ENCODE measurements at regions of chr12 and their contacts with region 1.

Region 1: GRCh38 chr12:124567661-124568373 is 405 bp upstream of the NCOR2 start:
- DNase-seq: peak; percentile 77
- H3K4me3 Mint-ChIP-seq: peak overlapping the region; percentile 80
- H3K27ac Mint-ChIP-seq: peak overlapping the region; percentile 87
- H3K4me1 Mint-ChIP-seq: peaks cover 33% of the 10 kb centered on the region
- H3K27me3 Mint-ChIP-seq: no peaks in the 10 kb centered on the region

Region 2: GRCh38 chr12:124347716-124348357 is 220.0 kb before region 1 on chr12:
- CTCF ChIA-PET with region 1: no interaction called
- intact Hi-C with region 1: loop called (anchors 10 kb)
- DNase-seq: peak; percentile 43
- H3K4me3 Mint-ChIP-seq: no peak overlapping the region
- H3K27ac Mint-ChIP-seq: no peak overlapping the region
- H3K4me1 Mint-ChIP-seq: no peaks in the 10 kb centered on the region
- H3K27me3 Mint-ChIP-seq: no peaks in the 10 kb centered on the region

Region 3: DNA sequence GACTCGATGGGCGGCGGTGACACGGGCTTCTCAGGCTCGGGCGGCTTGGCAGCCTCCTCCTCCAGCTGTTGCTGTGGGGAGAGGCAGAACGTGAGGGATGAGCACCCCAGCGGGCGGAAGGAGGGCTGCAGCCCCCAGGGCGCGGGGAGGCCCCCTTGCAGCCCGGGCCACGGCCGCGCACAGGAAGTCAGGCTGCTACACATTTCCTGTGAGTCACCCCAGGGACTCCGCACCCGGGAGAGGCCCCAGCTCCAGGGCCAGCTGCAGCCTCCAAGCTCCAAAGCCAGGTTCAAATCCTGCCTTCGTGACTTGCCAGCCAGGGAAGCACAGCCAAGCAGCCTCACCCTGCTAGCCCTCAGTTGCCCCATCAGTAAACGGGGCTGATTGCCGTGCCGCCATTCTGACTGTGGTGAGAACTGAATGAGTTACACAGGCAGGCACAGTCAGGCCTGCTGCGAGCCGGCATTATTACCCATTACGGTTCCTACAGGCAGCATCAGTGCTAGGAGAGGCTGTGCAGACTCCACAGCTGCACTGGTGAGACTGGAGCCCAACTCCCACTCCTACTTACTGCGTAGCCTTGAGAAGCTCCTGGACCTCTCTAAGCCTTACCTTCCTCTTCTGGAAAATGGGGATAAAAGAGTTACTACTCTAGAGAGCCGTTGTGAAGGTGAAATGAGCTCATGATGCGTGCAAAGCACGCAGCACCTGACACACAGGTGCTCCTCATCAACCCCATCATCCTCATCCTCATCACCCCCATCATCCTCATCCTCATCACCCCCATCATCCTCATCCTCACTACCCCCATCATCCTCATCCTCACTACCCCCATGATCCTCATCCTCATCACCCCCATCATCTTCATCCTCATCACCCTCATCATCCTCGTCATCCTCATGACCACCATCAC is 101.3 kb before region 1 on chr12:
- CTCF ChIA-PET with region 1: no interaction called
- intact Hi-C with region 1: loop called (anchors 2 kb)
- DNase-seq: peak; percentile 93
- H3K4me3 Mint-ChIP-seq: peak overlapping the region; percentile 21
- H3K27ac Mint-ChIP-seq: peak overlapping the region; percentile 56
- H3K4me1 Mint-ChIP-seq: peaks cover 27% of the 10 kb centered on the region
- H3K27me3 Mint-ChIP-seq: no peaks in the 10 kb centered on the region

Region 4: GRCh38 chr12:124680863-124681778 is 113.3 kb after region 1 on chr12:
- CTCF ChIA-PET with region 1: no interaction called
- intact Hi-C with region 1: loop called (anchors 1 kb)
- DNase-seq: peak; percentile 55
- H3K4me3 Mint-ChIP-seq: no peak overlapping the region
- H3K27ac Mint-ChIP-seq: no peak overlapping the region
- H3K4me1 Mint-ChIP-seq: peaks cover 14% of the 10 kb centered on the region
- H3K27me3 Mint-ChIP-seq: no peaks in the 10 kb centered on the region

Region 5: DNA sequence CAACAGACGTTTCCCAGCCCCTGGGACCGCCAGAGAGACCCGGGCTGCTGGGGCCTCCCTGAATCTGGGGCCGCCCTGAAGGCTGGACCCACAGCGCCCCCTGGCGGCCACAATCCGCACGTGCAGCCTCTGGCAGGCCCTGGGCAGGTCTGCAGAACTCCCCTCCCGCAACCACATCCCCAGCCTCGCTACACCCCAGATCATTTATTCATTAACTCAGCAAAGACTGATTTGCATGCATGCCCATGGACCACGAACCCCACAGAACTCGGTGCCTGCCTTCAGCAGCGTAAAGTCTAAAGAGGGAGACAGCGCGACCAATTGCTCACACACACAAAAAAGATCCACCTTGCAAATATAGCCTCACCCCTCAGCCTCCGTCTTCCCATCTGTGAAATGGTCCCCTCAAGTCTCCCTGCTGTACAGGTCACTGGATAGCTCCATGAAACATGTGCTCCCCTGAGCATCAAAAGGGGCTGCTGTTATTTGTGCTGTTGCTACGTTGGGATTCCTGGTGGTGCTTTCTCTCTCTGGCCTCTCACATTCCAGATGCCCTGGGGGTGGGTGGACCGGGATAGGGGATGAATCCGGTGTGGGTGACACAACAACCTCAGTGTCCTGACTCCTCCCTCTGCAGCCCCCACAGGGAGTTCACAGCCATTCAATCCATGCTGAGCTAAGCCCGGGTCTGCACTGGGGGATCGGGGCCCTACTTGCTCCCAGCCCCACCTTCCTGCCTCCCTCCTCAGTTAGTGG is 199.4 kb after region 1 on chr12:
- CTCF ChIA-PET with region 1: interaction called, 6 read pairs
- intact Hi-C with region 1: loop called (anchors 1 kb)
- DNase-seq: peak; percentile 88
- H3K4me3 Mint-ChIP-seq: no peak overlapping the region
- H3K27ac Mint-ChIP-seq: no peak overlapping the region
- H3K4me1 Mint-ChIP-seq: peaks cover 21% of the 10 kb centered on the region
- H3K27me3 Mint-ChIP-seq: peaks cover 9% of the 10 kb centered on the region

Measured in activated naive CD4-positive, alpha-beta T cell treated with anti-CD3 and anti-CD28 coated beads for 36 hours (primary cell).